CD4-positive, alpha-beta T cell (primary cell): ENCODE measurements at regions of chr10 and their contacts with region 1.

Region 1: GRCh38 chr10:122703439-122704118 is 3.9 kb upstream of the C10orf120 start:
- DNase-seq: peak; percentile 8 to 62 (median 34)
- ATAC-seq: no peak
- H3K4me3 ChIP-seq: no peak overlapping the region
- H3K4me3 Mint-ChIP-seq: no peak overlapping the region
- H3K27ac ChIP-seq: no peak overlapping the region
- H3K27ac Mint-ChIP-seq: no peak overlapping the region
- H3K4me1 ChIP-seq: peaks cover 9% of the 10 kb centered on the region
- H3K4me1 Mint-ChIP-seq: peaks cover 7% of the 10 kb centered on the region
- H3K27me3 ChIP-seq: no peaks in the 10 kb centered on the region
- H3K27me3 Mint-ChIP-seq: peaks cover 5% of the 10 kb centered on the region
- CTCF ChIP-seq: peak; percentile 74

Region 2: DNA sequence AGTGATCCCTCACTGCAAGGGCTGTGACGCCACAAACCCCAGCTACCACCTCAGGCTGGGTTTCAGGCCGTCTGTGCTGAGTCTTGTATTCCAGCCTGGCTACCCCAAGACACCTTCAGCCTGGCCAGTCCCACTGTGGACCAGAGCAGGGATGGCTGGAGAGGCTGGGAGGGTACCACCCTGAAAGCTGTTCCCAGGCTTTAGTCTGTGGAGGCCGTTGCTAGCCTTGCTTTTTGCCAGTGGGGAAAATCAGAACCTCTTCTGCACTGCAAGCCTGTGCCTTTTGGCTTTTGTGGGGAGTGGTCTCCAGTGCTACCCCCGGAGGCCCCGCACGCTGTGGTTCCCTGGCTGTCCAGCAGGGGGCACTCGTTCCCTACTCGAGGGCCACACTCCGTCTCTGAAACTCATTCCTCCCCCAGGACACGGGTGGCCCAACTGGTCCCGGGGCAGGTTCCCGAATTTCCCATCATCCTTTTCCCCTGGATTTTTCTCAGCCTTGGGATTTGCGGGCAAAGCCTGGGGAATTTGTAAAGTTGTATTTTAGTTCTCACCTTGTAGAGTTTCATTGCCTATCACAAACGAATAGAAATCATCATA is 560.8 kb before region 1 on chr10:
- CTCF ChIA-PET with region 1: no interaction called
- POLR2A ChIA-PET with region 1: no interaction called
- intact Hi-C with region 1: loop called in 1 of 2 experiments (anchors 10 kb)
- DNase-seq: peak in 10 of 14 experiments; percentile 2 to 44 (median 10)
- ATAC-seq: no peak
- H3K4me3 ChIP-seq: no peak overlapping the region
- H3K4me3 Mint-ChIP-seq: no peak overlapping the region
- H3K27ac ChIP-seq: no peak overlapping the region
- H3K27ac Mint-ChIP-seq: no peak overlapping the region
- H3K4me1 ChIP-seq: no peaks in the 10 kb centered on the region
- H3K4me1 Mint-ChIP-seq: no peaks in the 10 kb centered on the region
- H3K27me3 ChIP-seq: no peaks in the 10 kb centered on the region
- H3K27me3 Mint-ChIP-seq: peaks cover 8% of the 10 kb centered on the region
- CTCF ChIP-seq: peak; percentile 73

Region 3: GRCh38 chr10:122267849-122268737 is 435.5 kb before region 1 on chr10:
- CTCF ChIA-PET with region 1: no interaction called
- POLR2A ChIA-PET with region 1: no interaction called
- intact Hi-C with region 1: loop called in 1 of 2 experiments (anchors 10 kb)
- DNase-seq: peak in 13 of 14 experiments; percentile 23 to 61 (median 33)
- ATAC-seq: peak; percentile 57
- H3K4me3 ChIP-seq: no peak overlapping the region
- H3K4me3 Mint-ChIP-seq: no peak overlapping the region
- H3K27ac ChIP-seq: no peak overlapping the region
- H3K27ac Mint-ChIP-seq: no peak overlapping the region
- H3K4me1 ChIP-seq: no peaks in the 10 kb centered on the region
- H3K4me1 Mint-ChIP-seq: no peaks in the 10 kb centered on the region
- H3K27me3 ChIP-seq: peaks cover 0 to 10% of the 10 kb centered on the region in 2 experiments
- H3K27me3 Mint-ChIP-seq: peaks cover 47% of the 10 kb centered on the region
- CTCF ChIP-seq: peak; percentile 78

Region 4: GRCh38 chr10:122669842-122670241 is 33.7 kb before region 1 on chr10:
- CTCF ChIA-PET with region 1: no interaction called
- POLR2A ChIA-PET with region 1: no interaction called
- intact Hi-C with region 1: no loop called
- DNase-seq: no peak
- ATAC-seq: no peak
- H3K4me3 ChIP-seq: no peak overlapping the region
- H3K4me3 Mint-ChIP-seq: no peak overlapping the region
- H3K27ac ChIP-seq: no peak overlapping the region
- H3K27ac Mint-ChIP-seq: no peak overlapping the region
- H3K4me1 ChIP-seq: no peaks in the 10 kb centered on the region
- H3K4me1 Mint-ChIP-seq: no peaks in the 10 kb centered on the region
- H3K27me3 ChIP-seq: no peaks in the 10 kb centered on the region
- H3K27me3 Mint-ChIP-seq: peaks cover 48% of the 10 kb centered on the region
- CTCF ChIP-seq: no peak